ENCODE measurements at regions of chr5 and their contacts with region 1.

Region 1: GRCh38 chr5:10601246-10602030 is 37.6 kb downstream of the ANKRD33B start:
- DNase-seq: no peak
- ATAC-seq: peak; percentile 63
- H3K4me3 Mint-ChIP-seq: peak overlapping the region; percentile 72
- H3K27ac Mint-ChIP-seq: peak overlapping the region; percentile 84
- H3K4me1 Mint-ChIP-seq: peaks cover 66% of the 10 kb centered on the region
- H3K27me3 Mint-ChIP-seq: no peaks in the 10 kb centered on the region
- CTCF ChIP-seq: no peak

Region 2: DNA sequence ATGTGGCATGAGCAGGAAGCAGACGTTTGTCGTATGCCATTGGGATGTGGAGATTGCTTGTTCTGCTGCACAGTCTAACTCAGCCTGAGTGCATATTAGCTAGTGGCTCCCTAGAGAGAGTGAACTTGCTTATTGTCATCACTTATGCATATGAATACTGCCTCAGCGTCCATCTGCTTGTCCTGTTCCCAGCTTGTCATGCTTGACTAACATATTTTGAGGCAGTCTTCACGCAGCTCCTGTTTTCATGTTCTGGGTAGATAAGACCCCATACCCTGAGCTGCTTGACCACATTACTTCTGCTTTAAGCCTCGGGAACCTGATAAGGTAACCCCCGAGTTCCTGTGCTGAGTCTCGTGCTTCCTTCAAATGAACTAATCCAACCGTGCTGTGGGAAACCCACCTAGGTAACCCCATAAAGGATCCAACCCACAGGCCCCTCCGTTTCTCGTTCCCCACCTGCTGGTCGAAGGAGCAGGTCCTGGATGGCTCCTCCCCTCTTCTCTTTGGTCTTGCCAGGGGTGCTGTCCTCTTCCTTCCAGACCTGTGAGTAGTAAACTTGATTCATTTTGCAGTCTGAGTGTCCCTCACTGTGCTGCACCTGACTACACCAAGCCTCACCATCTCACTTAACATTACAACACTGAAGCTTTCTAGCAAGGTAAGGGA is 12.5 kb before region 1 on chr5:
- CTCF ChIA-PET with region 1: no interaction called
- POLR2A ChIA-PET with region 1: interaction called, 5 read pairs
- intact Hi-C with region 1: loop called (anchors 1 kb)
- DNase-seq: no peak
- ATAC-seq: peak; percentile 29
- H3K4me3 Mint-ChIP-seq: no peak overlapping the region
- H3K27ac Mint-ChIP-seq: no peak overlapping the region
- H3K4me1 Mint-ChIP-seq: peaks cover 83% of the 10 kb centered on the region
- H3K27me3 Mint-ChIP-seq: no peaks in the 10 kb centered on the region
- CTCF ChIP-seq: no peak

Measured in activated B cell treated with CpG ODN at 0.5 μM for 24 hours (primary cell).